ENCODE measurements at regions of chr14 and their contacts with region 1.

Region 1: DNA sequence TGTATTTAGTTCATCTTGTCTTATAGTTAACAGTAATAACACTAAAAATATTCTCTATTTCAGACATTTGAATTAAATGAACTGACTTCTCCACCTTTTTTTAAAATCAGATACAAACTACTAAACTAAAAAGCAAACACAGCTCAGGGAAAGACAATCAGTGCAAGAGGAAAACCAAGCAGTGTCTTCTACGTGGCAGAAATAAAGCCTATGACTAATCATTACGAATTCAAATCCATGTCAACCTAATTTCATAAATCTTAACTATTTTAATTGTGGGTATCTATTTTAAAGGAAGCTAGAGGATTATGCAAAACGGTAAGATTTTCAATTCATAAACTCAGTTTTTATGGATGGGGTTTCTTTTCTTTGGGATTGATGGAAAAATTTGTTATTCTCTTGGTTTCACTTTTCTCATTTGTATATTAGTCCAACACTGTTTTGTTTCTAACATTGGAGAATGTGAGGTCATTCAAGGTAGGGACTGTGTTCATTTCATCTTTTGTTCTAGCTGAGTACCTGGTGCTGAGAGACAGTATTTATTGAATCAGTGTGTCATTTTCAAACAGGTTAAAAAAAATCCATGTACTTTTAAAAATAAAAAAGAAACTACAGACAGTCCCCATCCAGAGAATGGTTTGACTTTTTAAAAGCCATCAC is 12.8 kb upstream of the PALS1 start:
- DNase-seq: no peak
- ATAC-seq: no peak; the same call in 1 of the 2 replicates
- H3K4me3 ChIP-seq: peak overlapping the region in 1 of 2 experiments; percentile 18; a peak in 1 of 4 replicates
- H3K27ac ChIP-seq: peak overlapping the region; percentile 88
- H3K4me1 ChIP-seq: peaks cover 28% of the 10 kb centered on the region
- H3K27me3 ChIP-seq: no peaks in the 10 kb centered on the region
- CTCF ChIP-seq: no peak

Region 2: DNA sequence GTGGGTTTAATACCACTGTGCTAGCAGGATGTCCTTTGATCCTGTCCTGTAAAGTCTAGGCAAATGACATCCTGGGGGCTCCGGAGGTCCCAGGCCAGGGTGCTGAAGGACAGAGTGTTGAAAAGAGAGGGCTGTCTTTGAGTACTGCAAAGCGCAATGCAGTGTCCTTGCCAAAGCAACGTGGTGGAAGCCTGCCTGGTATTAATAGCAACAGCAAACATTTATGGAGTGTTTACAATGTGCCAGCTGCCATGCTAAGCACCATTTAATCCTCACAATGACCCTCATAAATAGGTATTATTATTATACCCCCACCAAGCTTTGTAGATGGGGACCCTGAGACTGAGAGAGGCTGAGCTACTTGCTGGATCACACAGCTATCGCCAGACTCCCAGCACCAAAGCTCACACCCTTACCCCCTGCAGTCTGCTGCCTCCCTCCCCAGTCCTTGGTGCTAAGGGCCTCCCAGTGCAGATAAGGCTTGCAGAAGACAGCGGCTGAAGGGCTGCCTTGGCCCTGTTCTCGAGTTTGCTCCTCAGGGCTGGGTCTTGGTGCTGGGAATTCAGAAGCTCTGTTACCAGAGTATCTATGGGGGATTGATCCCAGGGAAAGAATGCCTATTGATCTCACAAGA is 1388.2 kb before region 1 on chr14:
- CTCF ChIA-PET with region 1: no interaction called
- POLR2A ChIA-PET with region 1: no interaction called
- in situ Hi-C with region 1: no loop called
- intact Hi-C with region 1: no loop called
- DNase-seq: no peak
- ATAC-seq: no peak
- H3K4me3 ChIP-seq: no peak overlapping the region
- H3K27ac ChIP-seq: no peak overlapping the region
- H3K4me1 ChIP-seq: no peaks in the 10 kb centered on the region
- H3K27me3 ChIP-seq: no peaks in the 10 kb centered on the region; the same call in 1 of the 2 replicates
- CTCF ChIP-seq: no peak

Region 3: DNA sequence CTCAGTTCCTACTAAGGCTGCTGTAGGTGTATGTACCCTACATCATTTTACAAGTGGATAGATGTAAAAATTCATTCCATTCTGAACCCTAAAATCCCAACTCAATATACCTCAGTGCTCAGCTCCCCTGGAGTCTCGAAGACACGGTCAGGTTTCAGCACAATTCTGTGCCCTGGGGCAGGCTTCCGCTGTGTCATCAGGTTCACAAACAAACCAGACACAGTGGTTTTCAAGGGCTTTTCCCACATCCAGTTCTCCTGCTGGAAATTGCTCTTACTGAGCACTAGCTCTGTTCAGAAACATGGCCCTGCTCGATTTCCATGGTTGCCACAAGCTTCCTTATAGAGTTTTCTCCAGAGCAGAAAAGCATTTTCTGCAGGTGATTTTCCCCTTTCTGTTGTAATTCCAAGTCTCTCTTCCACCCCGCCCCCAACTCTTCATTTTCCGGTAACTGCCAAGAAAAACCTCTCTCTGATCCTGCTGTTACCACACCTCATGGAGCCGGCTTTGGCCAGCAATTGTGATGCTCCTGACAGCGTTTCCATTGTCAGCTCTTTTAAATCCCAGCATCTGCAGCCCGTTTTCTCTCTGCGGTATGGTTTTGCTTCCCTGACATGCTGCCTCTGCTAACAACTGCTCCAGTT is 1225.3 kb before region 1 on chr14:
- CTCF ChIA-PET with region 1: no interaction called
- POLR2A ChIA-PET with region 1: no interaction called
- in situ Hi-C with region 1: no loop called
- intact Hi-C with region 1: no loop called
- DNase-seq: no peak
- ATAC-seq: no peak
- H3K4me3 ChIP-seq: no peak overlapping the region
- H3K27ac ChIP-seq: no peak overlapping the region
- H3K4me1 ChIP-seq: no peaks in the 10 kb centered on the region
- H3K27me3 ChIP-seq: no peaks in the 10 kb centered on the region; the same call in 1 of the 2 replicates
- CTCF ChIP-seq: no peak

Region 4: GRCh38 chr14:67285876-67286452 is 57.5 kb after region 1 on chr14:
- CTCF ChIA-PET with region 1: interaction called, 4 read pairs
- POLR2A ChIA-PET with region 1: no interaction called
- in situ Hi-C with region 1: no loop called
- intact Hi-C with region 1: loop called (anchors 10 kb)
- DNase-seq: no peak
- ATAC-seq: peak; percentile 38; the same call in 1 of the 2 replicates
- H3K4me3 ChIP-seq: no peak overlapping the region
- H3K27ac ChIP-seq: peak overlapping the region; percentile 68
- H3K4me1 ChIP-seq: peaks cover 18% of the 10 kb centered on the region
- H3K27me3 ChIP-seq: no peaks in the 10 kb centered on the region
- CTCF ChIP-seq: peak; percentile 65; the same call in 1 of the 2 replicates

Region 5: GRCh38 chr14:68655911-68656360 is 1427.5 kb after region 1 on chr14:
- CTCF ChIA-PET with region 1: no interaction called
- POLR2A ChIA-PET with region 1: no interaction called
- in situ Hi-C with region 1: no loop called
- intact Hi-C with region 1: no loop called
- DNase-seq: no peak
- ATAC-seq: peak; percentile 63; the same call in 1 of the 2 replicates
- H3K4me3 ChIP-seq: no peak overlapping the region
- H3K27ac ChIP-seq: no peak overlapping the region
- H3K4me1 ChIP-seq: no peaks in the 10 kb centered on the region
- H3K27me3 ChIP-seq: no peaks in the 10 kb centered on the region
- CTCF ChIP-seq: peak; percentile 42